AG04450 (cell line): ENCODE measurements at regions of chr6 and their contacts with region 1.

Region 1: GRCh38 chr6:43454696-43455530 is 435 bp downstream of the DLK2 start:
- DNase-seq: peak; percentile 69
- H3K4me3 ChIP-seq: peak overlapping the region; percentile 60
- H3K27ac ChIP-seq: no peak overlapping the region
- H3K27me3 ChIP-seq: peaks cover 3% of the 10 kb centered on the region
- CTCF ChIP-seq: no peak

Region 2: DNA sequence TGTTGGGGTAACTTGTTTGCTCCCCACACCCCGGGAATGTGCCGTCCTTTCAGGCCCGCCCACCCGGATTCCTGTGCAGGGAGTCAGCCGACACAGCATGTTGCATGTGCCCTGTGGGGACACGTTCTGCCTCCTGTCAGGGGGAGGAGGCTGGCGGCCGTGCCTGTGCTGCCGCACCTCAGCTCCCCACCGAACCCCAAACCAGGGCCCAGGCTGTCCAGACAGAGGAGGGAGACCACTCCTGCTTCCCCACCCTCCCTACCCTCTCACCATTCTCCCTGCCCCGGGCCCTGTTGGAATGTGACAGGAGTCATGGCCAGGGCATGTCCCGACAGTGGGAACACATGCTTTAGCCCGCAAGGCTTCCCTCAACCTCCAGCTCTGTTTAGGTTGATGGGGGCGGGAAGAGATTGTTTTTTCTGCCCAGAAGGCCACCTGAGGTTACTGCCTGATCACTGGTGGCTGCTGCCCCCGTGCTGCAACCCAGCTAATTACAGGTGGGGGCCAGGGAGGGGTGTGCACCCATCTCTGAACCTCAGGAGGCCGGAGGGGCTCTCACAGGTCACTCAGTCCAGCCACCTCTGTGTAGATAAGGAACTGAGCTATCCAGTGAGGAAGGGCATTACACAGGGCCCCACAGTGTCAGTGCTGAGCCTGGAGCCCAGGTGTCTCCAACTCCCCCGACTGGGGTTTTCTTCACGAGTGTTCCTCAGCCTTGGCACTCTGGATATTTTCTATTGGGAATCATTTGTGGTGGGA is 41.6 kb after region 1 on chr6:
- CTCF ChIA-PET with region 1: interaction called, 12 read pairs
- POLR2A ChIA-PET with region 1: interaction called, 3 read pairs
- DNase-seq: no peak
- H3K4me3 ChIP-seq: no peak overlapping the region
- H3K27ac ChIP-seq: peak overlapping the region; percentile 68
- H3K27me3 ChIP-seq: no peaks in the 10 kb centered on the region
- CTCF ChIP-seq: peak; percentile 65